PC-3 (cell line): ENCODE measurements at regions of chr20 and their contacts with region 1.

Region 1: GRCh38 chr20:57856658-57857057 is 146.8 kb upstream of the PMEPA1 start:
- DNase-seq: peak; percentile 75
- ATAC-seq: no peak; the same call in 1 of the 2 replicates
- H3K4me3 ChIP-seq: no peak overlapping the region
- H3K27ac ChIP-seq: peak overlapping the region; percentile 56
- H3K4me1 ChIP-seq: peaks cover 25% of the 10 kb centered on the region
- H3K27me3 ChIP-seq: no peaks in the 10 kb centered on the region
- CTCF ChIP-seq: peak; percentile 28; the same call in 1 of the 2 replicates

Region 2: DNA sequence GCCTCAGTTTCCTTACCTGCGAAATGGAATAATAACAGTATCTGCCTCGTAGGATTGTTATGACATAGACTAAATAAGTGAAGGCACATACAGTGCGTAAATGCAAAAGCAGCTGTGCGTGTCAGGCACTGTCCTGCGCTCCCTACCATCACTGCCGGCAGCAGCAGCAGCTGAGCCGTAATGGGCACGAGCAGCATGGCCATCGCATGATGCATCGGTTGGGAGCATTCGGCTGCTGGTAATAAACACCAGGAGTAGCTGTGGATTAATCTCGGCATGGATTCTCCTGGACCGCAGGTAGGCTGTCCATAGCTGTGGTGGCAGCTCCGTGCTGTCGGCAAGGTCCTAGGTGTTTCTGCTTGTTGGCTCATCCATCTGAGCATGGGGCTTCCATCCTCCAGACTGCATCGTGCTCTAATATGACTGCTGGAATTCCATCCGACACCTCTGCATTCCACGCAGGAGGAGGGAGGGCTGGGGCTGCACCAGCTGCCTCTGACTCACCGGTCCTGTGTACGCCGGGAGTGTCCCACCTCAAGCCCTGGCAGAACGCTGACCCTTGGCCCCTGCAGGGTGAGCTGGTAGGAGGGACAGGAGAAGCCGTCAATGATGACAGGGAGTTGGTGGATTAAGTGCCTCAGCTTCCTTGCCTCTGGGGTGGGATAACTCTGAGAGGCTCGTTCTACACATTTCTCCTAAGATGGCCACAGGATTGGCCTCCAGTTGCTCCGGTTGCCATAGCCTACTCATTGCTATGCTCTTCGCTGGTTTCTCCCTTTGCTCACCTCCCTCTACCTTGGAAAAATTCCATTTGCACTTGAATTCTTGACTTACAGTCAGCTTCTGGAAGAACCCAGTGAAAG is 45.9 kb before region 1 on chr20:
- CTCF ChIA-PET with region 1: no interaction called
- POLR2A ChIA-PET with region 1: no interaction called
- intact Hi-C with region 1: no loop called
- DNase-seq: peak; percentile 50
- ATAC-seq: peak; percentile 64
- H3K4me3 ChIP-seq: no peak overlapping the region
- H3K27ac ChIP-seq: no peak overlapping the region
- H3K4me1 ChIP-seq: peaks cover 6% of the 10 kb centered on the region; the same call in 1 of the 2 replicates
- H3K27me3 ChIP-seq: no peaks in the 10 kb centered on the region
- CTCF ChIP-seq: no peak

Region 3: GRCh38 chr20:58028123-58028522 is 171.5 kb after region 1 on chr20:
- CTCF ChIA-PET with region 1: no interaction called
- POLR2A ChIA-PET with region 1: no interaction called
- intact Hi-C with region 1: no loop called
- DNase-seq: no peak
- ATAC-seq: no peak
- H3K4me3 ChIP-seq: no peak overlapping the region
- H3K27ac ChIP-seq: no peak overlapping the region
- H3K4me1 ChIP-seq: peaks cover 10% of the 10 kb centered on the region; the same call in 1 of the 2 replicates
- H3K27me3 ChIP-seq: no peaks in the 10 kb centered on the region
- CTCF ChIP-seq: peak; percentile 46

Region 4: DNA sequence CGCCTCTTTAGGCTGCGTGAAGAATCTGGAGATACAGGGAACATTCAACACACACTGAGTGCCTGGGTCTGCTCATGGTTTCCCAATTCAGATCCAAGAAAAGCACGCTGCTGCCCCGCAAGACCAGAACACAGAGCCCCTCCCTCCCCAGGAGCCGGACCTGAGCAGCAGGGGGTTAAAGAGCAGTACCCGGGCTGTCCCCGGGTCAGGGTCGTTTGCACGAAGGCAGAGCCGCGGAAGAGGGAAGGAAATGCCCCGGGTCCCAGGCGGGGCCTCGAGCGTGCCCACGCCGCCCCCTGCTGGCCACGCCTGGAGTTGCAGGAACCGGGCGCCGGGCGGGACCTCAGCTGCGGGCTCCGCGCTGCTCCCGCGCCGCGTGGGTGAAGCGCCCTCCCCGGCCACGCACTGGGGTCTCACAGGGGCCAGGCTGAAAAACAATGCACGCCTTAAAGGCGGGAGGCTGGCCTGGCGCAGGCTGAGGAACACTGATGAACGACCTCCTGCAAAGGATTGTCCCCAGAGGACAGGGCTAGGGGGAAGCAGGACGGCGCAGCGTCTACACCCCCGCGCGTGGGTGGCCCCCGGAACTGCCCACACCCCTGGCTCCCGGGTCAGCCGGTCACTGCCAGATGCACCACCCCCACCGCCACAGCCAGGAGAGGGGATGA is 322.9 kb after region 1 on chr20:
- CTCF ChIA-PET with region 1: no interaction called
- POLR2A ChIA-PET with region 1: no interaction called
- intact Hi-C with region 1: loop called (anchors 5 kb)
- DNase-seq: peak; percentile 77
- ATAC-seq: peak; percentile 93
- H3K4me3 ChIP-seq: peak overlapping the region; percentile 66
- H3K27ac ChIP-seq: peak overlapping the region; percentile 4; the same call in 1 of the 2 replicates
- H3K4me1 ChIP-seq: peaks cover 12% of the 10 kb centered on the region
- H3K27me3 ChIP-seq: no peaks in the 10 kb centered on the region
- CTCF ChIP-seq: peak; percentile 99